CD8-positive, alpha-beta T cell (primary cell): ENCODE measurements at regions of chr13 and their contacts with region 1.

Region 1: DNA sequence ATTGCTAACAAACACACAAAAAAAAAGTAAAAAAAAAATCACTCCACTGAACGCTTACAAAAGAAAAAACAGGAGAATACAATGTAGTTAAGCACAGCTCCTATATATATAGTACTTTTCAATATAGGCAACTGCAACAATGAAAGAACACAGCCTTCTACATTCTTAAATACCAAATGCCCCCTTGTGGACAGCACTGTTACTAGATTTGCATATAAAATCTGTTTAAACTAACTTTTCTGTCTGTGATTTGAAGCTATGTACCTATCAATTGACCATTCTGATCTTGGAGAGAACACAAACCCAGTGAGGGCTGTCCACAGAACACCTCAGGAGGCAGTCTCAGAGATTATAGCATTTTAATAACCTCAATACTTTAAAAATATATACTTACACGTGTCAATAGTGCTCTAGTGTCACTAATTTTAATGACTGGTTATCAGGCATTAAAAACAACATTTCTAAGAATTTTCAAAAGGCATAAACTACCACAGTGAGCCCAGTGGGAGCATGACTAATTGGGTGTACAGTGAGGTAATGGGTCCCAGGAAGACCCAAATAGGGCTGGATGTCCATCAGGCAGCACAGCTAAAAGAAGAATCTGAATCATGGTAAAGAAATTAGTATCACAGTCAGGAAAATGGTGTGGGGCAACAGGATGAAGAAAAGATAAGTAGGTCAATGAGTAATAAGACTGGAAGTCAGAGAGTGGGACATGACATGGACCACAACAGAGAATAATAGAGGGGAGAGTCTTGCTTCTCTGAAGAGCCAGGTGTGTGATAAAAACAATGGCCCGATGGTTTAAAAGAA is 22.2 kb downstream of the CCDC169 start:
- DNase-seq: peak in 2 of 9 experiments; percentile 8 to 22
- ATAC-seq: no peak
- H3K4me3 ChIP-seq: no peak overlapping the region
- H3K4me3 Mint-ChIP-seq: no peak overlapping the region
- H3K27ac ChIP-seq: no peak overlapping the region
- H3K27ac Mint-ChIP-seq: no peak overlapping the region
- H3K4me1 ChIP-seq: no peaks in the 10 kb centered on the region
- H3K4me1 Mint-ChIP-seq: no peaks in the 10 kb centered on the region
- H3K27me3 ChIP-seq: no peaks in the 10 kb centered on the region
- H3K27me3 Mint-ChIP-seq: no peaks in the 10 kb centered on the region
- CTCF ChIP-seq: peak; percentile 42

Region 2: DNA sequence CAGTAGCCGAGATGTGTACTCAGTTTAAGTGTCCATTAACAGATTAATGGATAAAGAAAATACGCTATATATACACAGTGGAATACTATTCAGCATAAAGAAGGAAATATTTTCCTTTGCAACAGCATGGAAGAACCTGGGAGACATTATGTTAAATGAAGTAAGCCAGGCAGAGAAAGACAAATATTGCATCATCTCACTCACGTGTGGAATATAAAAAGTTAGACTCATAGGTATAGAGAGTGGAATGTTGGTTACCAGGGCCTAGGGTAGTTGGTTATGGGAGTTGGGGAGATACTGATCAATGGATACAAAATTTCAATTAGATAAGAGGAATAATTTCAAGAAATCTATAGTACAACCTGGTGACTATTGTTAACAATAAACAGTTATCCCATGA is 1009.0 kb before region 1 on chr13:
- CTCF ChIA-PET with region 1: no interaction called
- POLR2A ChIA-PET with region 1: no interaction called
- intact Hi-C with region 1: no loop called
- DNase-seq: no peak
- ATAC-seq: no peak
- H3K4me3 ChIP-seq: no peak overlapping the region
- H3K4me3 Mint-ChIP-seq: no peak overlapping the region
- H3K27ac ChIP-seq: no peak overlapping the region
- H3K27ac Mint-ChIP-seq: no peak overlapping the region
- H3K4me1 ChIP-seq: no peaks in the 10 kb centered on the region
- H3K4me1 Mint-ChIP-seq: no peaks in the 10 kb centered on the region
- H3K27me3 ChIP-seq: no peaks in the 10 kb centered on the region
- H3K27me3 Mint-ChIP-seq: no peaks in the 10 kb centered on the region
- CTCF ChIP-seq: no peak

Region 3: DNA sequence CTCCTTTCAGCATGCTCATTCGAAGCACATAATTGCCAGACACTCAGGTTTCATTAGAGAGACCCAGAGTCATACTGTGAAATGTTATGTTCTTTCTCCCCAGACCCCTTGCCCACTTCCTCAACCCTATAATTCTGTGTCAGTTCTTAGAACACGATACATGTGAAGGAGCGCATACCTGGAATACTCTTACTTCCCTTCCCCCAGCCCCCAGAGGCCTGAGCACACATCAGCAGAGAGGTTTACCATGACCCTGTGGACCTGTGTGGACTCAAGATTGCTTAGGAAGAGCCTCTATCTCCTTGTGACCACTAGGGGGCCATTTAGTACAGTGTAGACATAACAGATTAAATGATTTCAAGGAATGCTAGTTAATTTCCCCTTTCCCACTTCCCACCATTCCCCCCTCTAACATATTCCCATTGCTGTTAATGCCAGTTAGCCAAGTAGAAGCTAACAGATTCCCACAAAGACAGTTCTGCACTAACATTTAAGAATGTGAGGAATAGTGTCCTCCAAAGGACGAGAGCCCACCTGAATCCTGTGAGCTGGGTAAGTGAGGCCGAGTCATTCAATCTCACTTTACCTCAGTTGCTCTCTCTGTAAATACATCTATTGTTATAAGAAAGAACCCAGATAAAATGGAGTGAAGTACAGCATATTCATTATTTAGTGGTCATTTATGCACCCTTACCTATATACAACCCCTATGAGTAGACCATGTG is 644.7 kb before region 1 on chr13:
- CTCF ChIA-PET with region 1: no interaction called
- POLR2A ChIA-PET with region 1: no interaction called
- intact Hi-C with region 1: no loop called
- DNase-seq: peak in 1 of 9 experiments; percentile 3
- ATAC-seq: no peak
- H3K4me3 ChIP-seq: no peak overlapping the region
- H3K4me3 Mint-ChIP-seq: no peak overlapping the region
- H3K27ac ChIP-seq: no peak overlapping the region
- H3K27ac Mint-ChIP-seq: no peak overlapping the region
- H3K4me1 ChIP-seq: no peaks in the 10 kb centered on the region
- H3K4me1 Mint-ChIP-seq: no peaks in the 10 kb centered on the region
- H3K27me3 ChIP-seq: no peaks in the 10 kb centered on the region
- H3K27me3 Mint-ChIP-seq: no peaks in the 10 kb centered on the region
- CTCF ChIP-seq: no peak

Region 4: DNA sequence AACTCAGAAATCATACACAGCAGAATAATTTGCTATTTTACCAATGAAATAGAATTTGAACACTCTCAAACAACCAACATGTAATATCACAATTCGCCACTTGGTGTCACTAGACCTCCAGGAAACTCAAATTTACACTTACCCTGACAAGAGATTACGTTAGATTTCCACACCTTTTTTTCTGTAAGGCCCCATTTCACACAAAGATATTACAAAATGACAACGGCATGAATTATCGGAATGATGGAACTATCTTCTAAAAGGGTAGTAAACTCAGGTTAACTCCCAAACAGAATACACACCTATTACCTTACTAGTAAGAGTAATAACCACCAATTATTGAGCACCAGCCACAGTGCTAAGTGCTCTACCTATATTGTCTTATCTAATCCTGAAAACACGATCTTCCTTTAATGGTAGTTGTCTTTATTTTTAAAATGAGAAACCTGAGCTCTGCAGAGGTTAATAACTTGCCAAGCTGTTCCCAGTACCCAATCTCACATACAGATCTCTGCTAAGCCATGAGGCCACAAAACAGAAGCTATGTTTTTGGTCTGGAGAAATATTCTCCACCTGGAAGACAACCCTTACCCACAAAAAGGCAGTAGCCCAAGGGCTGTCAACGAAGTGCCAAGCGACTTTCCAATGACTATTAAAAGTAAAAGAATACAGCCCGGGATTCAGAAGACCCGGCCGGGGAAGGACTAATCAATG is 296.6 kb before region 1 on chr13:
- CTCF ChIA-PET with region 1: no interaction called
- POLR2A ChIA-PET with region 1: no interaction called
- intact Hi-C with region 1: loop called in 1 of 2 experiments (anchors 2 kb)
- DNase-seq: peak in 2 of 9 experiments; percentile 11 to 32
- ATAC-seq: no peak
- H3K4me3 ChIP-seq: no peak overlapping the region
- H3K4me3 Mint-ChIP-seq: no peak overlapping the region
- H3K27ac ChIP-seq: no peak overlapping the region
- H3K27ac Mint-ChIP-seq: no peak overlapping the region
- H3K4me1 ChIP-seq: no peaks in the 10 kb centered on the region
- H3K4me1 Mint-ChIP-seq: no peaks in the 10 kb centered on the region
- H3K27me3 ChIP-seq: no peaks in the 10 kb centered on the region
- H3K27me3 Mint-ChIP-seq: peaks cover 5% of the 10 kb centered on the region
- CTCF ChIP-seq: peak; percentile 83